RWPE1 (cell line): ENCODE measurements at regions of chr19 and their contacts with region 1.

Region 1: DNA sequence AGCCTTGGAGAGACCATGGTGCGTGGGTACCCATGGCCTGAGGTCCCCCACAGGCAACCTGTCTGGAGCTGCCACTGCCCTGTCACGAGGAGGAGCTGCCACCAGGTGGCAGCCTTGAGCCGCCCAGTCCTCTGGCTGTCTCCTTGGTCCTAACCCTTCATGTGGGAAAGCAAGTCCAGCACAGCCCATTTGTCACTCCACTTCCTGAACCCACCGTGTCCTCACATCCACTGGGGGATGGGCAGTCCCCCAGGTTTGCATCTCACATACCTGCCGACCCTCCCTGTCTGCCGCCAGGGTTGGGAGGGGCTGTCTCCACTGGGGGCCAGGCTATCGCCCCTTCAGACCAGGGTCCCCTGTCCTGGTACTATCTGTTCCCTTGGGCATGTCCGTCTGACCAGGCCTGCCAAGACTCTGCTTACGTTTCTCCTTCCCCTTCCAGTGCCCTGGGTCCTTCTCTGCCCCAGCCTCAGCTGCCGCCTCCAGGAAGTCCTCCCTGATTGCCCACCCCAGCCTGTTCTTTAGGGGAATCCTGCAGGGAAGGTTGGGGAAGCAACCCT is 4.5 kb downstream of the FAM174C start:
- DNase-seq: peak; percentile 71
- H3K27ac ChIP-seq: peak overlapping the region; percentile 100
- CTCF ChIP-seq: peak; percentile 93

Region 2: DNA sequence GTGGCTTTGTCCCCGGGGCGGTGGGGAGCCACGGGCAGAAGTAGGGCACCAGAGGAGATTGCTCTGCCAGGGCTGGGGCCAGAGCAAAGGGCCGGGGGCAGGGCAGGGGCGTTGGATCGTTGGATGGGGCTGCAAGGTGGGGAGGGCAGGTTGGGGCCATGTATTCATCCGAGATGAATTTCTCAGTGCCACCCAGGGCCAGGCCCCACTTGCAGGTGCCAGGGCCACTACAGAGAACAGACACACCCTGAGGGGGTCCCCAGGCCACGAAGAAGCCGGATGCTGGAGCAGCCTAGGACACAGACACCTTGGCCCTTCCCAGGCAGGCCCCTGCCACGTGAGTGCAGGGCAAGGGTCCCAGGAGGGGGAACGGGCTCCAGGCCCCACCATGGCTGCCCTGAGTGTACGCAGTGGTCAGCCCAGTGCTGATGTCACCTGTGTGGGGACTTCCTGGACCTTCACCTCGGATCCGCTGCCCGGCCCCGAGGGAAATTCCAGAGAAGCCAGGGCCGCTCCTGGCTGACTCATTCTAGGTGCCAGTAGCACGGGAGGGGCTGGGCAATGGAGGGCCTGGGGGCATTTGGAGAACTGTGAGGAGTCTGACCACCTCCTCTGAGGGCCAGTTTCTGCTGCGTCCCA is 96.2 kb before region 1 on chr19:
- CTCF ChIA-PET with region 1: no interaction called
- POLR2A ChIA-PET with region 1: no interaction called
- DNase-seq: peak; percentile 91
- H3K27ac ChIP-seq: peak overlapping the region; percentile 100
- CTCF ChIP-seq: no peak

Region 3: GRCh38 chr19:1232652-1233072 is 47.2 kb before region 1 on chr19:
- CTCF ChIA-PET with region 1: no interaction called
- POLR2A ChIA-PET with region 1: no interaction called
- DNase-seq: peak; percentile 39
- H3K27ac ChIP-seq: peak overlapping the region; percentile 77
- CTCF ChIP-seq: no peak

Region 4: GRCh38 chr19:1252821-1253513 is 26.9 kb before region 1 on chr19:
- CTCF ChIA-PET with region 1: no interaction called
- POLR2A ChIA-PET with region 1: no interaction called
- DNase-seq: peak; percentile 85
- H3K27ac ChIP-seq: peak overlapping the region; percentile 100
- CTCF ChIP-seq: no peak

Region 5: GRCh38 chr19:1324806-1325567 is 45.1 kb after region 1 on chr19:
- CTCF ChIA-PET with region 1: no interaction called
- POLR2A ChIA-PET with region 1: no interaction called
- DNase-seq: peak; percentile 65
- H3K27ac ChIP-seq: peak overlapping the region; percentile 56
- CTCF ChIP-seq: no peak

Region 6: GRCh38 chr19:1373534-1374249 is 93.8 kb after region 1 on chr19:
- CTCF ChIA-PET with region 1: interaction called, 12 read pairs
- POLR2A ChIA-PET with region 1: interaction called, 5 read pairs
- DNase-seq: no peak
- H3K27ac ChIP-seq: peak overlapping the region; percentile 47
- CTCF ChIP-seq: no peak